Activated naive CD4-positive, alpha-beta T cell treated with anti-CD3 and anti-CD28 coated beads for 36 hours (primary cell): ENCODE measurements at regions of chr12 and their contacts with region 1.

Region 1: DNA sequence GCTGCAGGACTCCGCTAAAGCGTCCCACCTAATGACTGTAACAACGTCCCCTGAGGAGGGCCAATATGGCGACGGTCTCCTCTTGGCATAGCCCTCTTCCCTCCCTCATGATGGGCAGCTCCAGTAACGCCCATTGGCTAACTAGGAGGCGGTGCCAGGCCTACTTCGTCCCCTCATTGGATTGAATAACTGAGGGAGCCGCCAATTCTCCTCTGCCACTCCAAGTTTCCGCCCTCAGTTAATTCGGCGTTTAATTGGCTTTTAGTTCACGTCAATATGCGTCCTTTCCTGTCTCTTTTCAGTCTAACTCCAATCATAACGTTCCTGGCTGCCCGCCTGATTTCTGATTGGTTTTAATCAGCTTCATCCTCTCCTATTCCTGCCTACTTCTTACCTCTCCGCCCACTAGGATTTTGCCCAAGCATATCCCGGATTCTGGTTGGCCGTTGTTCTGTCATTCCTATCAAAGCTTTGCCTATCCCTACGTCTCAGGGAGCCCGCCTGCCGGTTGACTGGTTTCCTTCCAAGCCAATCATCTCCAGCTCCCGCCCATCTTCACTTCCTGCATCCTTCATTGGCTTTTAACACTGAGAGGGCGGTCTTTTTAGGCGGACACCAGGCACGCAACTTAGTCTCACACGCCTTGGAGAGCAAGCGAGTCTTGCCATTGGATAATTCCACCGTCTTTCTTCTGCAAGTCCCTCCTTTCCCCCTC is 430 bp upstream of the SP1 start:
- DNase-seq: peak; percentile 99
- H3K4me3 Mint-ChIP-seq: no peak overlapping the region
- H3K27ac Mint-ChIP-seq: no peak overlapping the region
- H3K4me1 Mint-ChIP-seq: peaks cover 48% of the 10 kb centered on the region
- H3K27me3 Mint-ChIP-seq: no peaks in the 10 kb centered on the region

Region 2: DNA sequence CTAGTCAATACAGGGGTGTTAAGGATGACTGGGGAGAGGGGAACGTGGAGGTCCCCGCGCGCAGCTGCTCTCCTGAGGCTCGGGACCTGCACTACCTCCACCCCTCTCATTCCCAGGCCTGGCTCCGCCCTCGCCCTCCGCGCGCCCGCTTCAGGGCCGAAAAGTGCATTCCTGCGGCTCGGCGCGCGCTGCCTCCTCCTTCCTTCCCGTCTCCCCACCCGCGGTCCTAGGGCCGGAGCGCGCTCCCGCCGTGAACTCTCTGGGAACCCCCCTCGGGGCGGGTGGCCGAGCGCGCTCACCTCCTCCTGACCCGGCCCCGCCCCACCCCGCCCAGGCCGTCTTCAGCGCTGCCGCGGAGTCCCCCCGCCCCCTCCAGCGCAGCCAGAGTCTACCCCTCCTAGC is 158.7 kb before region 1 on chr12:
- CTCF ChIA-PET with region 1: no interaction called
- intact Hi-C with region 1: no loop called
- DNase-seq: peak; percentile 80
- H3K4me3 Mint-ChIP-seq: peak overlapping the region; percentile 90
- H3K27ac Mint-ChIP-seq: peak overlapping the region; percentile 92
- H3K4me1 Mint-ChIP-seq: peaks cover 72% of the 10 kb centered on the region
- H3K27me3 Mint-ChIP-seq: no peaks in the 10 kb centered on the region

Region 3: GRCh38 chr12:53414756-53415417 is 35.3 kb after region 1 on chr12:
- CTCF ChIA-PET with region 1: interaction called, 4 read pairs
- intact Hi-C with region 1: loop called (anchors 1 kb)
- DNase-seq: no peak
- H3K4me3 Mint-ChIP-seq: no peak overlapping the region
- H3K27ac Mint-ChIP-seq: no peak overlapping the region
- H3K4me1 Mint-ChIP-seq: peaks cover 74% of the 10 kb centered on the region
- H3K27me3 Mint-ChIP-seq: no peaks in the 10 kb centered on the region

Region 4: DNA sequence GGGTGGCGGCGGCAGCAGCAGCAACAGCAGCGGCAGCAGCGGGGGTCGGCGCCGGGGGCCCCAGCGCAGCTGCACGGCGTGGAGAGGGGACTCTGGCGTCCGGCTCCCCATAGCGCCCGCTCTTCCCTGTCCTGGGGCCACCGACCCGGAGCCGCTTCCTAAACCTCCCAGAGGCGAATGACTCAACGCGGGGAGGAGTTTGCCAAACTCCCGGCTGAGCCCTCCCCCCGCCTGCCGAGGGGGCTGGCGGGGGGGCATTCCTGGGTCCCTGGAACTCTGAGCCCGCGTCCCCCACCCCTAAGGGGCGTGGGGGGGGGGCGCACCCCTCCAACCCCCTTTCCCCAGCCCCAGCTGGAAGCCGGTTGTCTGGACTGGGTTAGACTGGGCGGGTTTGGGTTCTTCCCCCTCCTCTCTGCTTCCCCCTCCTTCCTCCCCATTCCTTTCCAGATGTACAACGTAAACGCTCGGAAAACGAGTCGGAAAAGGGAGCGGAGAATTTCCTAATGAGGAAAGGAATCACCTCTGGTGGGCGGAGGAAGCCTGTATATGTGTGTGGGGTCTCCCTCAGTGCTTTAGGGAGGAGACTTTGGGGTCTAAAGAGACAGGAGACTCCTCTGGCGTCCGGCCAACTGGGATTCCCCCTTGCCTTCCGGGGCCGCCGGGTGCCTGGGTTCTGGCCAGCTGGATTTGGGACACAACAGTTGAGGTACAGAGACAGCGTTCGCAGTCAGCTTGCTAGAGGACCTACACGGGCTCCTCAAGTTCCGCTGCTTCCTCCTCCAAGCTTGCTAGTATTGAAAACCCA is 1039.7 kb after region 1 on chr12 and contains the start of gene ITGA5:
- CTCF ChIA-PET with region 1: no interaction called
- intact Hi-C with region 1: loop called (anchors 10 kb)
- DNase-seq: peak; percentile 59
- H3K4me3 Mint-ChIP-seq: peak within 1 kb of the TSS; percentile 95
- H3K27ac Mint-ChIP-seq: peak within 1 kb of the TSS; percentile 89
- H3K4me1 Mint-ChIP-seq: peaks cover 52% of the 10 kb centered on the region
- H3K27me3 Mint-ChIP-seq: no peaks in the 10 kb centered on the region
- total RNA-seq, gene ITGA5: 17.9 to 18.4 TPM